ENCODE measurements at regions of chr3 and their contacts with region 1.

Region 1: GRCh38 chr3:52444860-52445793 is at the start of gene SEMA3G:
- DNase-seq: peak; percentile 61 to 83
- ATAC-seq: peak; percentile 88 to 96 (median 96)
- H3K4me3 ChIP-seq: no peak within 1 kb of the TSS
- H3K4me3 Mint-ChIP-seq: no peak within 1 kb of the TSS
- H3K27ac ChIP-seq: no peak within 1 kb of the TSS
- H3K27ac Mint-ChIP-seq: no peak within 1 kb of the TSS
- H3K4me1 ChIP-seq: peaks cover 12% of the 10 kb centered on the region
- H3K4me1 Mint-ChIP-seq: peaks cover 6% of the 10 kb centered on the region in 2 donors
- H3K27me3 ChIP-seq: no peaks in the 10 kb centered on the region
- H3K27me3 Mint-ChIP-seq: no peaks in the 10 kb centered on the region
- CTCF ChIP-seq: peak; percentile 62
- total RNA-seq, gene SEMA3G: 0.07 to 0.55 TPM in 2 of 3 donors, not detected in the other

Region 2: GRCh38 chr3:52220380-52221026 is 224.6 kb before region 1 on chr3:
- intact Hi-C with region 1: loop called (anchors 5 kb)
- DNase-seq: peak; percentile 79 to 93
- ATAC-seq: peak; percentile 83 to 87 (median 84)
- H3K4me3 ChIP-seq: no peak overlapping the region
- H3K4me3 Mint-ChIP-seq: peak overlapping the region; percentile 40
- H3K27ac ChIP-seq: no peak overlapping the region
- H3K27ac Mint-ChIP-seq: peak overlapping the region in 1 of 2 donors; percentile 10
- H3K4me1 ChIP-seq: peaks cover 73% of the 10 kb centered on the region
- H3K4me1 Mint-ChIP-seq: peaks cover 39 to 40% of the 10 kb centered on the region in 2 donors
- H3K27me3 ChIP-seq: no peaks in the 10 kb centered on the region
- H3K27me3 Mint-ChIP-seq: no peaks in the 10 kb centered on the region
- CTCF ChIP-seq: peak; percentile 76

Region 3: DNA sequence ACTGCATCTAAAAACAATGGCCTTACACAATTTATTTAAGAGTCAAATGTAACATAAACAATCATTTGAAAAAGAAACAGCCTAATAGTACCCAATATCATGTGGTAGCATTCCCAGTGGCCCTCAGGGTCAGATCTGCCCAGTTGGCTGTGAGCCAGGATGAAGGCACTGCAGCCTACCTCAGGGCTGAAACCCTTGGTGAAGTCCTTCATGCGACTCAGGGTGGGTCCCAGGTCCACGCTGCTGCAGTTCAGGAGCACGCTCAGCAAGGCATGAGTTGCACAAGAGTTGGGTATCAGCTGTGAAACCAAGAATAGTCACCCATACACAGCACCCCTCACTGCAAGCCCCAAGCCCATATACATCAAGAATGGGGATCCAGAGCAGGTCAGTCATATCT is 37.3 kb before region 1 on chr3:
- intact Hi-C with region 1: loop called (anchors 1 kb)
- DNase-seq: no peak
- ATAC-seq: no peak
- H3K4me3 ChIP-seq: no peak overlapping the region
- H3K4me3 Mint-ChIP-seq: peak overlapping the region; percentile 91
- H3K27ac ChIP-seq: no peak overlapping the region
- H3K27ac Mint-ChIP-seq: peak overlapping the region; percentile 85 to 93
- H3K4me1 ChIP-seq: peaks cover 36% of the 10 kb centered on the region
- H3K4me1 Mint-ChIP-seq: peaks cover 31 to 38% of the 10 kb centered on the region in 2 donors
- H3K27me3 ChIP-seq: no peaks in the 10 kb centered on the region
- H3K27me3 Mint-ChIP-seq: no peaks in the 10 kb centered on the region
- CTCF ChIP-seq: no peak

Region 4: GRCh38 chr3:52428151-52429005 is 16.7 kb before region 1 on chr3:
- intact Hi-C with region 1: loop called (anchors 1 kb)
- DNase-seq: peak in 1 of 2 donors; percentile 70
- ATAC-seq: peak in 2 of 3 donors; percentile 68 to 70
- H3K4me3 ChIP-seq: no peak overlapping the region
- H3K4me3 Mint-ChIP-seq: no peak overlapping the region
- H3K27ac ChIP-seq: no peak overlapping the region
- H3K27ac Mint-ChIP-seq: no peak overlapping the region
- H3K4me1 ChIP-seq: no peaks in the 10 kb centered on the region
- H3K4me1 Mint-ChIP-seq: no peaks in the 10 kb centered on the region
- H3K27me3 ChIP-seq: no peaks in the 10 kb centered on the region
- H3K27me3 Mint-ChIP-seq: peaks cover 0 to 6% of the 10 kb centered on the region in 2 donors
- CTCF ChIP-seq: peak; percentile 60

Measured in natural killer cell (primary cell).